ENCODE measurements at regions of chr2 and their contacts with region 1.

Region 1: DNA sequence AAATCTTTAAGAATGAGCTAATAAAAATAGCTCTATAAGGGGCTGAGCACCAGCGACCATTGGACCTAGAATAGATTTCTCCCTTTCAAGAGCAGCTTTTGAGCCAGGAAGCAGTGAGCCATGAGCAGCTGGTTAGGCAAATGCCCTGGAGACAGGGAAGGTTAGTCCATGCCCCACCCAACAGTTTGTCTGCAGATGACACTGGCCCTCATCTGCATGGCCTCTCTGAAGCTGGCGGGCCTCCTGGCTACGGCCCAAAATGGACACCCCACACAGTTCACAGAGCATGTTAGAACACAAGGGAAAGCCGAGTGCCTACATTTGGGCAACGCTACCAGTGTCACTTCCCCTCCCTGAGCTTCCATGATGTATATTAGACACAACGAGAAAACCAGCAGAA is 201.1 kb downstream of the MGAT5 start:
- DNase-seq: no peak
- H3K4me3 ChIP-seq: no peak overlapping the region
- H3K27ac ChIP-seq: no peak overlapping the region
- H3K4me1 ChIP-seq: no peaks in the 10 kb centered on the region; a peak in 2 of 7 replicates
- H3K27me3 ChIP-seq: no peaks in the 10 kb centered on the region
- CTCF ChIP-seq: no peak
- EP300 ChIP-seq: no peak
- POLR2A ChIP-seq: no peak
- RAD21 ChIP-seq: no peak

Region 2: GRCh38 chr2:134118279-134119116 is 336.4 kb before region 1 on chr2:
- CTCF ChIA-PET with region 1: interaction called, 43 read pairs
- POLR2A ChIA-PET with region 1: no interaction called
- DNase-seq: peak in 1 of 2 experiments; percentile 64
- H3K4me3 ChIP-seq: no peak overlapping the region
- H3K27ac ChIP-seq: no peak overlapping the region
- H3K4me1 ChIP-seq: peaks cover 6 to 18% (median 14%) of the 10 kb centered on the region in 4 experiments; a peak in 6 of 7 replicates
- H3K27me3 ChIP-seq: peaks cover 0 to 3% (median 0%) of the 10 kb centered on the region in 4 experiments; a peak in 1 of 7 replicates
- CTCF ChIP-seq: peak in 2 of 3 experiments; percentile 75 to 83; a peak in 3 of 4 replicates
- EP300 ChIP-seq: no peak
- POLR2A ChIP-seq: no peak
- RAD21 ChIP-seq: peak; percentile 95 to 97

Region 3: DNA sequence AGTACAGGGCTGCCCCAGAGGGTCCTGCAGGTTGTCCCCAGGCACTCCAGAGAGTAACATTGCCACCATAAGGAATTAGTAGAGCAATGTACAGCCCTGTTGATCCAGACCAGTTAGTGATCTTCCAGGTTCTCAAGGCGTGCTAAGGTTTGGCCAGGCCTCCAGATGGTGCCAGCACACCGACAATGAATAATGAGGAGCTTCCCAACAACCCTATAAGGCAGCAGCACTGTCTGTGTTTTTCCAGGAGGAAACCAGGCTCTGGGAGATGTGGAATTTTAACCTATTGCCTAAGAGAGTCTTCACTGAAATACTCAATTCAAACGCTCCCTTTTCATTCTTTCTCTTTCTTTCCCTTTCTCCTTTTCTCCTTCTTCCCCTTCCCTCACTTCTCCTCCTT is 79.0 kb before region 1 on chr2:
- CTCF ChIA-PET with region 1: interaction called, 37 read pairs
- POLR2A ChIA-PET with region 1: no interaction called
- DNase-seq: no peak
- H3K4me3 ChIP-seq: no peak overlapping the region
- H3K27ac ChIP-seq: no peak overlapping the region
- H3K4me1 ChIP-seq: no peaks in the 10 kb centered on the region
- H3K27me3 ChIP-seq: no peaks in the 10 kb centered on the region
- CTCF ChIP-seq: peak in 2 of 3 experiments; percentile 23 to 36; a peak in 3 of 4 replicates
- EP300 ChIP-seq: no peak
- POLR2A ChIP-seq: no peak
- RAD21 ChIP-seq: peak; percentile 34 to 47

Region 4: GRCh38 chr2:134402410-134402809 is 52.5 kb before region 1 on chr2:
- CTCF ChIA-PET with region 1: interaction called, 18 read pairs
- POLR2A ChIA-PET with region 1: no interaction called
- DNase-seq: no peak
- H3K4me3 ChIP-seq: no peak overlapping the region
- H3K27ac ChIP-seq: no peak overlapping the region
- H3K4me1 ChIP-seq: no peaks in the 10 kb centered on the region; a peak in 2 of 7 replicates
- H3K27me3 ChIP-seq: no peaks in the 10 kb centered on the region
- CTCF ChIP-seq: no peak
- EP300 ChIP-seq: no peak
- POLR2A ChIP-seq: no peak
- RAD21 ChIP-seq: no peak

Region 5: GRCh38 chr2:134420259-134420658 is 34.7 kb before region 1 on chr2:
- CTCF ChIA-PET with region 1: interaction called, 24 read pairs
- POLR2A ChIA-PET with region 1: no interaction called
- DNase-seq: no peak
- H3K4me3 ChIP-seq: no peak overlapping the region
- H3K27ac ChIP-seq: no peak overlapping the region
- H3K4me1 ChIP-seq: 0 out of 7 replicates have a peak, but pooled peaks cover 0 to 3% (median 0%) of the 10 kb centered on the region in 4 experiments
- H3K27me3 ChIP-seq: no peaks in the 10 kb centered on the region
- CTCF ChIP-seq: no peak
- EP300 ChIP-seq: no peak
- POLR2A ChIP-seq: no peak
- RAD21 ChIP-seq: no peak

Region 6: GRCh38 chr2:134466141-134466540 is 11.2 kb after region 1 on chr2:
- CTCF ChIA-PET with region 1: interaction called, 55 read pairs
- POLR2A ChIA-PET with region 1: no interaction called
- DNase-seq: peak in 1 of 2 experiments; percentile 68
- H3K4me3 ChIP-seq: no peak overlapping the region
- H3K27ac ChIP-seq: no peak overlapping the region
- H3K4me1 ChIP-seq: no peaks in the 10 kb centered on the region; a peak in 1 of 7 replicates
- H3K27me3 ChIP-seq: no peaks in the 10 kb centered on the region
- CTCF ChIP-seq: peak; percentile 34 to 71 (median 69)
- EP300 ChIP-seq: no peak
- POLR2A ChIP-seq: no peak
- RAD21 ChIP-seq: peak; percentile 71 to 80